Dorsolateral prefrontal cortex (tissue), 120 donors: ENCODE measurements at regions of chr12 and their contacts with region 1.

Region 1: DNA sequence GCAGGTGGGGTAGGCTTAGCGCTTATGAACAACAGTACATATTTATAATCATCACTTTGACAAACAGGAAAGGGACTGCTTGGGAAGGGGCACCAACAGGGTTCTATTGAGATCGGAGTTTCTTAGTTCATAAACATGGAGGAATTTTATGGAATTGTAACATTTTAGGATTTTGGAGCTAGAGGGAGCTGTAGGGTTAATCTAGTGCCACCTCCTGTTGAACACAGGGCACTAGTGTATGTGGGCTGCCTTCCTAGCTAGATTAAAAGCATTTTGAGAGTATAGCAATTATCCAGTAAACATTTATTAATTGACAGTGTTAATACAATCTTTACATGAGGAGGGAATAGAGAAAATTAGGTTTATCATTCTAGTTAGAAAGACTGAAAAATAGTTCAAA is 23.1 kb upstream of the TBC1D30 start:
- DNase-seq: no peak
- H3K4me3 ChIP-seq: no peak overlapping the region
- H3K27ac ChIP-seq: no peak overlapping the region
- H3K27me3 ChIP-seq: no peaks in the 10 kb centered on the region
- CTCF ChIP-seq: peak in 19 of 56 donors; percentile 7 to 40 (median 21)

Region 2: DNA sequence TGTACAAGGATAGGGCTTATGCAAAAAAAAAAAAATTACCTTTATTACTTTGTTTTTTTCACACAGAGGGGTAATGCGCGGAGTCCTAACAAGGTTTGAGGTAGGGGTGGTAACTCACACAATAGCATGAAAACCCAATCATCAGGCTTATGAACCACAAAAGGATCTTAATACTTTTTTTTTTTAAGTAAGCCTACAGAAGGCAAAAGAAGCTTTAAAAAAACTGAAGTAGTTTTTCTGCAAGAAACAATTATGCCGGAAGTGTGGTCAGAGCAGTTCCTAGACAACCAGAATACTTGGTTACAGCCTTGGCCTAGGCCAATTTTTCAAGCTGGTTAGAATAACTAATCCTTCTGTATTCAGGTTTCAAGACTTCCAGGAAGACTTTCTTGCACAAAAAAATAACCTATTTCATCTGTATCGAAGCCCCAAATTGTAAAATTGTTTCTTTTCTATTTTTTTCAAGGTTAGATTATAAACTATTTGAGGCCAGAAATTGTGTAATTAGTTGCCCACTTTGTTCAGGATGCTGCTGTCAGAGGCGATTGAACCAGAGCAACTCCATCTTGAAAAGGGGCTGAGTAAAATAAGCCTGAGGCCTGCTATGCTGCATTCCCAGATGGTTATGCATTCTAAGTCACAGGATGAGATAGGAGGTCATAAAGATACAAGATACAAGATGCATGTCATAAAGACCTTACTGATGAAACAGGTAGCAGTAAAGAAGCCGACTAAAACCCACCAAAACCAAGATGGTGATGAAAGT is 40.4 kb before region 1 on chr12:
- intact Hi-C with region 1: loop called in 1 of 2 experiments (anchors 2 kb)
- DNase-seq: no peak
- H3K4me3 ChIP-seq: peak overlapping the region in 1 of 59 donors; percentile 91
- H3K27ac ChIP-seq: no peak overlapping the region
- H3K27me3 ChIP-seq: no peaks in the 10 kb centered on the region
- CTCF ChIP-seq: no peak

Region 3: DNA sequence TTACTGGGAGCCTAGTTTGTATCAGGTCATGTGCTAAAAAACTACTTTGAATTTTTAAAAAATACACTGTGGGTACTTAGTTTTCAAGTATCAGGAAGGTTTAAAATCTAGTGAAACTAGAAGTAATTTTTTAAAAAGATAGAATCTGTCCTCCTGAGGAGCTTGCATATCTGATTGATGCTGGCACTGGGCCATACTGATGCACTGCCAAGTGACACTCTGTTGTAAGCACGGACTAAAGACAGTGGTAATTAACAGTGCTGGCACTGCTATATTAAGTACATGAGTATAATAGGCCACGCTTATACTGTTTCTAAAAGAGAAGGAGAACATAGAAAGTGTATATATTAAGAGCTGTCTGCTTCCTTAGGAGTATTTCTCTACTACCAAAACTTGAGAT is 13.1 kb after region 1 on chr12:
- intact Hi-C with region 1: no loop called
- DNase-seq: no peak
- H3K4me3 ChIP-seq: no peak overlapping the region
- H3K27ac ChIP-seq: no peak overlapping the region
- H3K27me3 ChIP-seq: no peaks in the 10 kb centered on the region
- CTCF ChIP-seq: no peak

Region 4: DNA sequence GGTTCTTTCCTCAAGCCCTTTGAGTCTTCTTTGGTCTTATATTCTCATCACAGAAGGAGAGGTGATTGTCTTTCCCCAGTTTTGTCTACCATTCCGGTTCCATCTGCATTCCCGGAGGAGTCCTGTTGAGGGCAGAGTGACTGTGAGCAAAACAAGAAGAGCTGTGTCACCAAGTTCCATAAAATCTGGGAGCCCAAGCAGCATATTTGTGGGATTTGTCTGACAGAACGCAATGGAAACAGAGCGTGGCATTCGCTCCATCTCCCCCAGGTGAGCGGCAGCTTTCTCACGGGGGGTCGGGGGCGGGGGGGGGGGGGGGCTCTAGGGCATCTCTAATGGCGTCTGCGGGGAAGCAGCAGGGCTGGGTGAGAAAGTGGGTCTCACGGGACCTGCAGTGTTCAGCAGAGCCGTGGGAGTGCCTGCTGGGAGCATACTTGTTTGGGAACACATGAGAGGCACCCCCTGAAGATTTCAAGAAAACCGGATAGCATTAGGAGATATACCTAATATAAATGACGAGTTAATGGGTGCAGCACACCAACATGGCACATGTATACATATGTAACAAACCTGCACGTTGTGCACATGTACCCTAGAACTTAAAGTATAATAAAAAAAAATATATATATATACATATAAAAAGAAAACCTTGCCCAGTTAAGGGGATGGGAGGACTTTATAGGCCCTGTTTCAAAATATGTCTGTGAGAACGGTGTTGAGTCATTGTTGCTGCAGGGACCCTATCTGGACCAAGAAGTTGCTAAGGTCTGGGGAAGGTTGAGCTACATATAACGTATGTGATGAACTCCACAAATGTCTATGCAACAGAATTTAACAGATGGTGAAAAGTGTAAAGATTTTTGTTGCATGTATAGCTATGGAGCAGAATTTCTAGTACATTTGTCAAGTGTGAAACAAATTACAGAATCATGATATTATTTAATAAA is 82.5 kb after region 1 on chr12:
- intact Hi-C with region 1: loop called in 1 of 2 experiments (anchors 10 kb)
- DNase-seq: no peak
- H3K4me3 ChIP-seq: peak overlapping the region in 1 of 59 donors; percentile 9
- H3K27ac ChIP-seq: no peak overlapping the region
- H3K27me3 ChIP-seq: no peaks in the 10 kb centered on the region
- CTCF ChIP-seq: no peak

Region 5: DNA sequence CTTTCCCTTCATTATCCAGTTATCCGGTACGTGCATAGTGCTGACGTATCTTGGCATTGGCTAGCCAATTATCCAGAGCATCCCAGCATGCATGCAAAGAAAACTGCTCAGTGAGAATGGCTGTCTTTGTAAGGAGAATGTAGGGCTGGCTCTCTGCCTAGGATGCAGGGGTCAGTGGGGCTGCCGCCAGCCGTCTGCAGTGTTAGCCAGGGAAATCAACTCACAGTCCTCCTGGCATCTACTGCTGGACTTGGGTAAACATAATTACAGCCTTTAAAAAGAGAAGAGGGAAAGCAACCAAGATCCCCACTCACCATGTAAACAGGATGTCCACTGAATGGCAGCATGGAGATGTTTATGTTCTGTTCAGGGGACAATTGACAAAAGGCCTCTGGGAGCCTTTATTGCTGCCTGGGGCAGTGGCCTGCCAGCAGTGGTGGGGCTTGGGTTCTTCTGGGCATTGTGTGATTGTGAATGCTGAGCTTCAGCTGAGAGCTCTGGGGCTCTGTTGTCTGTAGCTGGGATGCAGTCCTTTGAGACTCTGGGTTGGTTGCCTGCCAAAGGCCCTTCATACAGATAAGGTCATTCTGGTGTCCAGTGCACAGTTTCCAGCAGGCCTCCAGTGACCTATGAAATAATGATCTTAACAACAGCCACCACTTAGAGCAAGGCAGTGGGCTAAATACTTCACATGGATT is 144.9 kb after region 1 on chr12:
- intact Hi-C with region 1: no loop called
- DNase-seq: peak; percentile 52 to 93 (median 82)
- H3K4me3 ChIP-seq: peak overlapping the region in 2 of 59 donors; percentile 3 to 17
- H3K27ac ChIP-seq: peak overlapping the region in 51 of 59 donors; percentile 1 to 81 (median 53)
- H3K27me3 ChIP-seq: peaks cover 0 to 13% (median 0%) of the 10 kb centered on the region in 45 donors
- CTCF ChIP-seq: peak in 9 of 56 donors; percentile 4 to 39 (median 20)

Region 6: GRCh38 chr12:65121049-65121955 is 319.9 kb after region 1 on chr12 and contains the start of gene WIF1:
- intact Hi-C with region 1: loop called (anchors 5 to 10 kb)
- DNase-seq: peak in 6 of 10 donors; percentile 20 to 52 (median 43)
- H3K4me3 ChIP-seq: peak within 1 kb of the TSS; percentile 12 to 66 (median 45)
- H3K27ac ChIP-seq: no peak within 1 kb of the TSS
- H3K27me3 ChIP-seq: peaks cover 0 to 99% (median 66%) of the 10 kb centered on the region in 45 donors
- CTCF ChIP-seq: peak in 38 of 56 donors; percentile 13 to 58 (median 26)
- total RNA-seq, gene WIF1: 1.5 to 77.3 (median 22.0) TPM

Region 7: GRCh38 chr12:66107451-66107915 is 1306.1 kb after region 1 on chr12:
- intact Hi-C with region 1: loop called in 1 of 2 experiments (anchors 10 kb)
- DNase-seq: peak in 3 of 10 donors; percentile 10 to 27 (median 13)
- H3K4me3 ChIP-seq: no peak overlapping the region
- H3K27ac ChIP-seq: no peak overlapping the region
- H3K27me3 ChIP-seq: peaks cover 0 to 23% (median 0%) of the 10 kb centered on the region in 45 donors
- CTCF ChIP-seq: peak; percentile 50 to 92 (median 81)